ENCODE measurements at regions of chr2 and their contacts with region 1.

Region 1: DNA sequence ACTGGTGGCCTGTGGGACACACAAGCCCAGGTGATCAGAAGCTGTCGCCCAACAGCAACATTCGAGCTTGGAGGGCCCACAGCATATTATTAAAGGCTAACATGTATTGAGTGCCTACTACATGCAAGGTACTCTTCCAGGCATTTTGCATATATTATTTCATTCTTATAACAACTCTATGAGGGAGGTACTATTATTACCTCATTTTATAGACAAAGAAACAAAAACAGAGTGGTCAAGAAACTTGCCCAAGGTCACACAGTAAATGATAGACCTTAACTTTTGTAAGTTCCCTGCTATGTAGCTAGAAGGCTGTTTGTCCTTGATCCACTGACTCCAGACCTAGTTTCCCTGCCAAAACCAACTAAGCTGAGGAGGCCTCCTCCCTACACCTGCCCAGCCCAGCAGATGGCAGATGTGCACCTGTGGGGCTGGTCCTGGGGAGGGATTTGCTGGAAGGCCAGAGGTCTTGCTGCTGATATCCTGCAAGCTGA is 35.7 kb downstream of the KANSL3 start:
- DNase-seq: peak; percentile 61
- H3K4me3 Mint-ChIP-seq: no peak overlapping the region
- H3K27ac Mint-ChIP-seq: no peak overlapping the region
- H3K4me1 Mint-ChIP-seq: peaks cover 23% of the 10 kb centered on the region
- H3K27me3 Mint-ChIP-seq: no peaks in the 10 kb centered on the region

Region 2: DNA sequence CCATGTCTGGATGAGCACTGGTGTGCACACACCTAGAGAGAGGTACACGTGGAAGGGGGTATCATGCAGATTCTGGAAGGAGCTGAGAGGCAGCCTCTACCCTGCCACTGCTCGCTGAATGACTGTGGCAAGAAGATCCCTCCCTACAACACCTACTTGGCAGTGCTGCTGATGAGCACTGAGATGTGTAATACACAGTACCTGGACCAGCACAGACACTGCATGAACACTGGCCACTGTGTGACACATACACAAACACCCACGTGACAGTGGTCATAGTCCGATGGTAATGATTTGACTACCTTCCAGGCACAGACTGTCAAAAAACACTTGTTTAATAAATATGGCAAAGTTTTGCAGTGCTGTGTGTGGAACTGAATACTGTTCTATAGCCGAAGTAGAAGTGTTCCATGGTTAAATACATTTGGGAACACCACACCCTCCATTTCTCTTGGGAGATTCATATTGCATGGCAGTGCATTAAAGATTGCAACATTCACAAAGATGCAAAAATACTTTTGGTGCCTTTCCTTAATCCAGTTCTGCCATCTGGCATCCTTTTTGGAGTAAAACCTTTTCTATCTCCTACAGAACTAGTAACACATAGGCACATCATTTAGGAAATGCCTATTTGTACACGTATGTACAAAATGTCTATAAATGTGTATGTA is 1510.4 kb before region 1 on chr2:
- intact Hi-C with region 1: no loop called
- DNase-seq: no peak
- H3K4me3 Mint-ChIP-seq: no peak overlapping the region
- H3K27ac Mint-ChIP-seq: no peak overlapping the region
- H3K4me1 Mint-ChIP-seq: peaks cover 16% of the 10 kb centered on the region
- H3K27me3 Mint-ChIP-seq: no peaks in the 10 kb centered on the region

Region 3: GRCh38 chr2:96579422-96579821 is 23.0 kb before region 1 on chr2:
- intact Hi-C with region 1: loop called (anchors 2 kb)
- DNase-seq: no peak
- H3K4me3 Mint-ChIP-seq: no peak overlapping the region
- H3K27ac Mint-ChIP-seq: no peak overlapping the region
- H3K4me1 Mint-ChIP-seq: no peaks in the 10 kb centered on the region
- H3K27me3 Mint-ChIP-seq: peaks cover 6% of the 10 kb centered on the region

Region 4: DNA sequence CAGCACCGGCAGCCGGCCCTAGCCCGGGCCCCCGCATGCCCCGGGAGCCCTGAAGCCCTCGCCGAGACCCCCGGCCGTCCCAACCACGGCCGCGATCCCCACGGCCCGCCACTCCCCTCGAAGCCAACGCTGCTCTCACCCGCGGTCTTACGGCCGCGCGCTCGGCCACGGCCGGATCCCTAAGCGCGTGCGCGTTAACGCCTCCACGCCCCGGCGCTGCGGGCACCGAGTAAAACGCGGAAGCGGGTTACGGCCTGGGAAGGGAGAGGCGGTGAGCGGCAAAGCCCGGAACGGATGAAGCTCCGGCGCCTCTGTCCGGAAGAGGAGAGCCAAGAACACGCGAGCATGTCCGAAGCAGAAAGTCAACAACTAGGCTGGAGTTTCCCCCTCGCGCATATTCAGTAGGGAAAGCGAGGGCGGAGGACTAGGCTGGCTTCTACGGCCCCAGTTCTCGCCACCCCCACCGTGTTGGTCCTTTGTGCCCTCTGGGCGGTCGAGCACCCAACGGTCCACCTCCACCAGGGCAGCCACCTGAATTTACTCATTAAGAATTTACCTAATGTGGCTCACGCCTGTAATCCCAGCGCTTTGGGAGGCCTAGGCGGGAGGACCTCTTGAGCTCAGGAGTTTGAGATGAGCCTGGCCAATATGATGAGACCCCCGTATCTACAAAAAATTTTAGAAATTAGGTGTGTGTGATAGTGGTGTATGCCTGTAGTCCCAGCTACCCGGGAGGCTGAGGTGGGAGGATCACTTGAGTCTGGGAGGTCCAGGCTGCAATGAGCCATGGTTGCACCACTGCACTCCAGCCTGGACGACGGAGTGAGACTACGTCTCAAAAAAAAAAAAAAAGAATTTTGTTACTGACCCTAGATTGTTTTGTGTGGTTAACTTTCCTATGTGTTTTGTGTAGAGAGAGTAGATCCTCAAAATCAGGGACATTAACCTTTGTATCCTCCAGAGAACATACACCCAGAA is 36.1 kb after region 1 on chr2 and contains the start of gene KANSL3:
- intact Hi-C with region 1: loop called (anchors 5 kb)
- DNase-seq: peak; percentile 98
- H3K4me3 Mint-ChIP-seq: peak within 1 kb of the TSS; percentile 97
- H3K27ac Mint-ChIP-seq: peak within 1 kb of the TSS; percentile 97
- H3K4me1 Mint-ChIP-seq: peaks cover 24% of the 10 kb centered on the region
- H3K27me3 Mint-ChIP-seq: peaks cover 3% of the 10 kb centered on the region
- total RNA-seq, gene KANSL3: 45.5 and 46.5 TPM in 2 replicates